ENCODE measurements at regions of chr1 and their contacts with region 1.

Region 1: DNA sequence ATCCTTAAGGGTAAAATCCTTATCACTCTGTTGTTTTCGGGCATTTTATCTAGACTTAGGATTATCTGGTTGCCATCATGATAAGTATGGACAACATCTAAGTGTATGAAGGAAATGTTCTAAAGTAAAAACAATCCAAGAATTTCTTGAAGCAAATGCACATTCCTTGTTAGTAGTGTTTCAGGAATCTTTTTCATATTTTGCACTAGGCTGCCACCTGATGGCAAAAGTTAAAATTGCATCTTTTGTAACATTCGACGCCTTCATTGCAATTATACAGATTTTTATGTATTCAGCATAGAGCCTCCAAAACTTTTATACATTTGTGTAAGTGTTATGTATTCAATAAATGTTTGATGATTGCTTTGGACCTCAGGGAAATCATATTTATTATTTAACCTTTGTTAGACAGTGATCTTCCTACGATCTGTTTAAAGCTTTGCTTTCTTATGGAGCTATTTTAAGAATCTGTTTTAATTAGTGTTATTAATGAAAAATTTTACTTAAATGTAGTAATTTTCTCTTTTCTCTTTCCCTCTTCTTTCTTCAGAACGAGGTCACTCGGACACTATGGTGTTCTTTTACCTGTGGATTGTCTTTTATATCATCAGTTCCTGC is 49.4 kb upstream of the KIAA1614 start:
- DNase-seq: peak; percentile 34
- H3K4me3 Mint-ChIP-seq: no peak overlapping the region
- H3K27ac Mint-ChIP-seq: no peak overlapping the region
- H3K4me1 Mint-ChIP-seq: peaks cover 2% of the 10 kb centered on the region
- H3K27me3 Mint-ChIP-seq: no peaks in the 10 kb centered on the region

Region 2: GRCh38 chr1:180515864-180516388 is 347.3 kb before region 1 on chr1:
- CTCF ChIA-PET with region 1: interaction called, 105 read pairs
- intact Hi-C with region 1: loop called (anchors 1 kb)
- DNase-seq: peak; percentile 76
- H3K4me3 Mint-ChIP-seq: no peak overlapping the region
- H3K27ac Mint-ChIP-seq: no peak overlapping the region
- H3K4me1 Mint-ChIP-seq: peaks cover 3% of the 10 kb centered on the region
- H3K27me3 Mint-ChIP-seq: peaks cover 3% of the 10 kb centered on the region

Region 3: GRCh38 chr1:180778782-180779398 is 84.4 kb before region 1 on chr1:
- CTCF ChIA-PET with region 1: interaction called, 10 read pairs
- intact Hi-C with region 1: loop called (anchors 5 kb)
- DNase-seq: peak; percentile 9
- H3K4me3 Mint-ChIP-seq: no peak overlapping the region
- H3K27ac Mint-ChIP-seq: no peak overlapping the region
- H3K4me1 Mint-ChIP-seq: peaks cover 6% of the 10 kb centered on the region
- H3K27me3 Mint-ChIP-seq: no peaks in the 10 kb centered on the region

Region 4: GRCh38 chr1:180994262-180994661 is 131.0 kb after region 1 on chr1:
- CTCF ChIA-PET with region 1: no interaction called
- intact Hi-C with region 1: no loop called
- DNase-seq: peak; percentile 20
- H3K4me3 Mint-ChIP-seq: no peak overlapping the region
- H3K27ac Mint-ChIP-seq: no peak overlapping the region
- H3K4me1 Mint-ChIP-seq: peaks cover 5% of the 10 kb centered on the region
- H3K27me3 Mint-ChIP-seq: no peaks in the 10 kb centered on the region

Region 5: DNA sequence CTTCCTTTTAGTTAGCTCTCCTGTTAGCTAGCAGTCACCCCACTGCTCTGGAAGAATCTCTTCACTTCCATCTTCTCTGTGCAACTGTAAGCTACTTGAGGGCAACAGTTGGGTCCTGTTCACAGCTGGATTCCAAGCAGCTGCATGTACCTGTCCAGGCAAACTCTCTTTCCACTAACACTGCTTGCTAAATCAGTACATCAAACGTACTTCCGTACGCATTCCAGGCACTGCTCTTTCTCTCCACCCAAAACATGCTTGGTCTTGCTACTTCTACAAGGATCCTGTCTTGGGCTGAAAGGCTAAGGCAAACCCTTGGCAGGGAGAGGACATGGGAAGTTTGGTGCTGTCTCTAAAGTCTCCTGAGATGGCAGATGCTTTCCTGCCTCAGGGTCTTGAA is 480.8 kb after region 1 on chr1:
- CTCF ChIA-PET with region 1: no interaction called
- intact Hi-C with region 1: no loop called
- DNase-seq: no peak
- H3K4me3 Mint-ChIP-seq: no peak overlapping the region
- H3K27ac Mint-ChIP-seq: no peak overlapping the region
- H3K4me1 Mint-ChIP-seq: peaks cover 7% of the 10 kb centered on the region
- H3K27me3 Mint-ChIP-seq: no peaks in the 10 kb centered on the region

Region 6: GRCh38 chr1:181356505-181357340 is 493.5 kb after region 1 on chr1:
- CTCF ChIA-PET with region 1: no interaction called
- intact Hi-C with region 1: no loop called
- DNase-seq: no peak
- H3K4me3 Mint-ChIP-seq: no peak overlapping the region
- H3K27ac Mint-ChIP-seq: no peak overlapping the region
- H3K4me1 Mint-ChIP-seq: no peaks in the 10 kb centered on the region
- H3K27me3 Mint-ChIP-seq: no peaks in the 10 kb centered on the region